Naive thymus-derived CD4-positive, alpha-beta T cell (primary cell): ENCODE measurements at regions of chr3 and their contacts with region 1.

Region 1: DNA sequence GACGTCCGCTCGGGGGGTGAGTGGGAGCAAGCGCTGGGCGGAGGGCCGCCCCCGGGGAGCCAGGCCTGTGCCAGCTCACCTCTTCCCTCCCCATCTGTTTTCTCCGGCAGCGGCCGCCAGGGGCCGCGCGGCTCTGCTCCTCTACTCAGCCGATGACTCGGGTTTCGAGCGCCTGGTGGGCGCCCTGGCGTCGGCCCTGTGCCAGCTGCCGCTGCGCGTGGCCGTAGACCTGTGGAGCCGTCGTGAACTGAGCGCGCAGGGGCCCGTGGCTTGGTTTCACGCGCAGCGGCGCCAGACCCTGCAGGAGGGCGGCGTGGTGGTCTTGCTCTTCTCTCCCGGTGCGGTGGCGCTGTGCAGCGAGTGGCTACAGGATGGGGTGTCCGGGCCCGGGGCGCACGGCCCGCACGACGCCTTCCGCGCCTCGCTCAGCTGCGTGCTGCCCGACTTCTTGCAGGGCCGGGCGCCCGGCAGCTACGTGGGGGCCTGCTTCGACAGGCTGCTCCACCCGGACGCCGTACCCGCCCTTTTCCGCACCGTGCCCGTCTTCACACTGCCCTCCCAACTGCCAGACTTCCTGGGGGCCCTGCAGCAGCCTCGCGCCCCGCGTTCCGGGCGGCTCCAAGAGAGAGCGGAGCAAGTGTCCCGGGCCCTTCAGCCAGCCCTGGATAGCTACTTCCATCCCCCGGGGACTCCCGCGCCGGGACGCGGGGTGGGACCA is 632 bp upstream of the CRELD1 start:
- DNase-seq: peak; percentile 76 to 88 (median 84)
- ATAC-seq: peak; percentile 74
- H3K4me3 ChIP-seq: peak overlapping the region; percentile 98
- H3K4me3 Mint-ChIP-seq: peak overlapping the region; percentile 71 to 99 (median 98)
- H3K27ac ChIP-seq: peak overlapping the region; percentile 98
- H3K27ac Mint-ChIP-seq: peak overlapping the region; percentile 94 to 100 (median 99)
- H3K4me1 ChIP-seq: peaks cover 25 to 28% of the 10 kb centered on the region in 2 donors
- H3K4me1 Mint-ChIP-seq: peaks cover 30 to 58% (median 48%) of the 10 kb centered on the region in 7 donors
- H3K27me3 ChIP-seq: no peaks in the 10 kb centered on the region
- H3K27me3 Mint-ChIP-seq: no peaks in the 10 kb centered on the region

Region 2: GRCh38 chr3:9396700-9397521 is 536.1 kb before region 1 on chr3:
- CTCF ChIA-PET with region 1: no interaction called
- POLR2A ChIA-PET with region 1: no interaction called
- intact Hi-C with region 1: loop called (anchors 1 kb)
- DNase-seq: peak; percentile 98 to 100 (median 99)
- ATAC-seq: peak; percentile 82
- H3K4me3 ChIP-seq: peak overlapping the region; percentile 85
- H3K4me3 Mint-ChIP-seq: peak overlapping the region; percentile 89 to 100 (median 96)
- H3K27ac ChIP-seq: peak overlapping the region; percentile 82
- H3K27ac Mint-ChIP-seq: peak overlapping the region; percentile 90 to 100 (median 98)
- H3K4me1 ChIP-seq: peaks cover 46 to 55% of the 10 kb centered on the region in 2 donors
- H3K4me1 Mint-ChIP-seq: peaks cover 59 to 80% (median 75%) of the 10 kb centered on the region in 7 donors
- H3K27me3 ChIP-seq: no peaks in the 10 kb centered on the region
- H3K27me3 Mint-ChIP-seq: peaks cover 0 to 2% (median 0%) of the 10 kb centered on the region in 5 donors

Region 3: DNA sequence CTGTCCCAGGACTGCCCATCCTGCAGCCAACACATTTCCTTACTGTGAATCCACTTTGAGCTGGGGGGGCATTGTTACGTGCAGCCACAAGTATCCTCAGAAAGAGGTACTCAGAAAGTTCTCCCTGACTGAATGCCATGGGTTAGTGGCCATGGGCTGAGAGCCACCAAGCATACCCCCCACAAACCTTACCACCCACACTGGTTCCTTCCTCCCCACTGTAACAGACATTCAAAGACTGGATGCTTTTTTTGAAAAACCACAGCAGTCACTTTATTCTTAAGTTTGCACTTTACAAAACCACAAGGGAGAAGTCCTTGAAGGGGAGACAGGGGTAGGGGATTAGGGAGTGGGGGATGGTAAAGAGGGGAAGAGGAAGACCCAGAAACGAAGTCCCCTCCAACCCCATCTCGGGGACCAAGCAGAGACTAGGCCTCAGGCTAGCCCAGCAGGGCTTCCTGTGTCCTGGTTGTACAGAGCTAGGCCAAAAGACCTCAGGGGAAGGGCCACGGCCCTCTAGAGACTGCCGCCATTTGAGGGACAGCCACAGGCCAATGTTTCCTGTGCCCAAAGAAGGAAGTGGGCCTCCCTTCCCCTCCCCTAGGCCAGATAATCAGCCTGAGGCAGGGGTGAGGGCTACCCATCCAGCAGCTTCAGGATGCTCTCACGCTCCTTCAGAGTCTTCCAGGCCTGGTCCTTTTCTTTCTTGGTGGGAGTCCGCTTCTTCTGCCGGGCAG is 153.1 kb before region 1 on chr3:
- CTCF ChIA-PET with region 1: interaction called, 3 read pairs
- POLR2A ChIA-PET with region 1: interaction called, 3 read pairs
- intact Hi-C with region 1: loop called in 1 of 2 experiments (anchors 2 kb)
- DNase-seq: peak in 7 of 9 donors; percentile 21 to 48 (median 38)
- ATAC-seq: peak; percentile 80
- H3K4me3 ChIP-seq: peak overlapping the region; percentile 23
- H3K4me3 Mint-ChIP-seq: peak overlapping the region; percentile 41 to 82 (median 72)
- H3K27ac ChIP-seq: peak overlapping the region; percentile 5
- H3K27ac Mint-ChIP-seq: peak overlapping the region; percentile 1 to 90 (median 72)
- H3K4me1 ChIP-seq: peaks cover 33 to 39% of the 10 kb centered on the region in 2 donors
- H3K4me1 Mint-ChIP-seq: peaks cover 43 to 63% (median 57%) of the 10 kb centered on the region in 7 donors
- H3K27me3 ChIP-seq: no peaks in the 10 kb centered on the region
- H3K27me3 Mint-ChIP-seq: no peaks in the 10 kb centered on the region

Region 4: GRCh38 chr3:9890249-9891071 is 42.5 kb before region 1 on chr3 and contains the start of gene JAGN1:
- CTCF ChIA-PET with region 1: no interaction called
- POLR2A ChIA-PET with region 1: interaction called, 48 read pairs
- intact Hi-C with region 1: loop called (anchors 1 kb)
- DNase-seq: peak; percentile 78 to 92 (median 88)
- ATAC-seq: peak; percentile 93
- H3K4me3 ChIP-seq: peak within 1 kb of the TSS; percentile 99
- H3K4me3 Mint-ChIP-seq: peak within 1 kb of the TSS; percentile 91 to 100 (median 97)
- H3K27ac ChIP-seq: peak within 1 kb of the TSS; percentile 100
- H3K27ac Mint-ChIP-seq: peak within 1 kb of the TSS; percentile 92 to 99 (median 99)
- H3K4me1 ChIP-seq: peaks cover 8 to 15% of the 10 kb centered on the region in 2 donors
- H3K4me1 Mint-ChIP-seq: peaks cover 25 to 48% (median 36%) of the 10 kb centered on the region in 7 donors
- H3K27me3 ChIP-seq: no peaks in the 10 kb centered on the region
- H3K27me3 Mint-ChIP-seq: peaks cover 0 to 2% (median 0%) of the 10 kb centered on the region in 5 donors
- total RNA-seq, gene JAGN1: 16.0 to 34.5 (median 28.1) TPM

Region 5: DNA sequence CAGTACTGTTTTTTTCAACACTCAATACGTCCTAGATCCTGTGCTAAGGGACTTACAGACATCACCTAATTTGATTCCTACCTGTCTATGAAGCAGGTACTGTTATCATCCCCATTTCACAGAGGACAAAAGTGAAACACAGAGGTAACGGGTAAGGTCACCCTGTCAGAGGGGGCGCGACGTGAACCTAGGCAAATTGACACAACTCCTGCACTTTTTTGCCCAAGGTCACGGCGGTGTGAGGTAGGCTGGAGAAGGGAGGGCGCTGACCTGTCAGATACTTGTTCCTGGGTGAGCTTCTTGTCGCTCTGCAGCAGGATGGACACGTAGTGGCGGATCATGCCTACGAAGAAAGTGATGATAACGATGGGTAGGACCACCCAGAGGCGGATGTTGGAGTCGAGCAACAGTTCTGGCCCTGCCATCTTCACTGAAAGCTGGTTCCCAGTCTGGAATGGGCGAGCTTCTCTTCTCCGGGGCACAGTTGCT is 53.3 kb after region 1 on chr3:
- CTCF ChIA-PET with region 1: no interaction called
- POLR2A ChIA-PET with region 1: interaction called, 24 read pairs
- intact Hi-C with region 1: loop called (anchors 1 kb)
- DNase-seq: no peak
- ATAC-seq: peak; percentile 52
- H3K4me3 ChIP-seq: peak overlapping the region; percentile 100
- H3K4me3 Mint-ChIP-seq: peak overlapping the region; percentile 95 to 99 (median 98)
- H3K27ac ChIP-seq: peak overlapping the region; percentile 96
- H3K27ac Mint-ChIP-seq: peak overlapping the region; percentile 95 to 100 (median 98)
- H3K4me1 ChIP-seq: peaks cover 13 to 15% of the 10 kb centered on the region in 2 donors
- H3K4me1 Mint-ChIP-seq: peaks cover 0 to 48% (median 35%) of the 10 kb centered on the region in 7 donors
- H3K27me3 ChIP-seq: no peaks in the 10 kb centered on the region
- H3K27me3 Mint-ChIP-seq: no peaks in the 10 kb centered on the region

Region 6: DNA sequence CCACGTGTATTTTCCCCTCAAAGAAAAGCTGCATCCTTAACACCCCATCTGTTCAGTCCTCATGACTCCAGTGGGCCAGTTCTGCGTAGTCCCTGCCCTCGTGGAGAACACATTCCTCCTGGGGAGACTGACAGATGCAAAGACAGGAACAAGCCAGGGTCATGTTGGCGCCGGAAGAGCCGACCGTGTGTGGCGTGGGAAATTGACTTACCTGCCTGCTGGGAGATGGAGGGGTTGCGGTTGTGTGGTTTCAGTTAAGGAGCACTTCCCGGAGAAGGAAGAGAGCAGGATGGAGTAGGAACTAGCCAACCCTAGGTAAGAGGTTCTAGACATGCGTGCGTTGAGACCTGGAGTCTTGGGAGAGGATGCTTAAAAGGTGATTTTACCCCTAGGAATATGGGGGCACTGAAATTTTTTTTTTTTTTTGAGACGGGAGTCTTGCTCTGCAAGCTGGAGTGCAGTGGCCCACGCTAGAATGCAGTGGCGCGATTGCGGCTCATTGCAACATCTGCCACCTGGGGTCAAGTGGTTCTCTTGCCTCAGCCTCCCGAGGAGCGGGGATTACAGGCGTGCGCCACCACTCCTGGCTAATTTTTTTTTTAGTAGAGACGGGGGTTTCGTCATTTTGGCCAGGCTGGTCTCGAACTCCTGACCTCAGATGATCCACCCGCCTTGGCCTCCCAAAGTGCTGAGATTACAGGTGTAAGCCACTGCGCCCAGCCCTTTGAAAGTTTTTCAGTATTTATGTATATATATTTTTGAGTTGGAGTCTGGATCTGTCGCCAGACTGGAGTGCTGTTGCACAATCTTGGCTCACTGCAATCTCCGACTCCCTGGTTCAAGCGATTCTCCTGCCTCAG is 209.9 kb after region 1 on chr3:
- CTCF ChIA-PET with region 1: no interaction called
- POLR2A ChIA-PET with region 1: interaction called, 8 read pairs
- intact Hi-C with region 1: loop called in 1 of 2 experiments (anchors 1 kb)
- DNase-seq: peak in 2 of 9 donors; percentile 11 to 12
- ATAC-seq: no peak
- H3K4me3 ChIP-seq: peak overlapping the region; percentile 87
- H3K4me3 Mint-ChIP-seq: peak overlapping the region; percentile 85 to 98 (median 96)
- H3K27ac ChIP-seq: peak overlapping the region; percentile 95
- H3K27ac Mint-ChIP-seq: peak overlapping the region; percentile 38 to 98 (median 94)
- H3K4me1 ChIP-seq: peaks cover 10 to 12% of the 10 kb centered on the region in 2 donors
- H3K4me1 Mint-ChIP-seq: peaks cover 14 to 48% (median 37%) of the 10 kb centered on the region in 7 donors
- H3K27me3 ChIP-seq: no peaks in the 10 kb centered on the region
- H3K27me3 Mint-ChIP-seq: no peaks in the 10 kb centered on the region

Region 7: DNA sequence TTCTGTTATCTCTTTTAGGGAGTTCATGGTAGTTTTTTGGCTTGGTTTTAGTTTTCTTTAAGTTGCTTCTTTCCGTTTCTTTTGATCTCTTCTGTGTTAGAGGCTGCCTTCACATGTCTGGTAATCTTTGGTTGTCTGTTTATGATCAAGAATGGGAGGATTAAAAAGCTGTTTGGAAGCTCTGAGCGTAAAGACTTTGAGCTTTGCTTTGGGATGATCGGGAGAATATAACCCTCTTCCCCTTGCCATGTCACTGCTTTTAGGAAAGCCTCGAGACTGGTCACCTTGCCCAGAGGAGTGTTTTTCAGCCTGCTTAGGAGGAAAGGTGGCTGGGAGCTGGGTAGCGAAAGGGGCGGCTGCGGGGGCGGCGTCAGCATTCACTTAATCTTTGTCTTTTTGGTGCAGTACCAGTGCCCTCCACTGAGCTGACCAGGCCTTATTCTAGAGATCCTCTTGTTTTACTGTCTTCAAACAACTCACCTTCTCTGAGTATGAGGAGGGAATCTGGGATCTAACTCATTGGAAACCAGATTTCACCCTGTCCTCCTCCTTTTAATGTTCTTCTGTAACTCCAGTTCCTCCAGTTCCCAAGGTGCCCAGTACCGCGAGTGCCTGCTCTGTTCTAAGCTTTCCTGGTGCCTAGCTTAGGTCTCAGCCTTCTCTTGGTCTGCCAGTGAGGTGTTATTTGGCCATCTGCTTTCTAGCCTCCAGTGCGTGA is 330.8 kb after region 1 on chr3:
- CTCF ChIA-PET with region 1: interaction called, 3 read pairs
- POLR2A ChIA-PET with region 1: interaction called, 11 read pairs
- intact Hi-C with region 1: no loop called
- DNase-seq: peak; percentile 33 to 76 (median 71)
- ATAC-seq: peak; percentile 96
- H3K4me3 ChIP-seq: peak overlapping the region; percentile 47
- H3K4me3 Mint-ChIP-seq: peak overlapping the region; percentile 68 to 87 (median 77)
- H3K27ac ChIP-seq: peak overlapping the region; percentile 73
- H3K27ac Mint-ChIP-seq: peak overlapping the region; percentile 82 to 97 (median 91)
- H3K4me1 ChIP-seq: peaks cover 36 to 62% of the 10 kb centered on the region in 2 donors
- H3K4me1 Mint-ChIP-seq: peaks cover 50 to 97% (median 80%) of the 10 kb centered on the region in 7 donors
- H3K27me3 ChIP-seq: no peaks in the 10 kb centered on the region
- H3K27me3 Mint-ChIP-seq: no peaks in the 10 kb centered on the region